Motor neuron (in vitro differentiated cells): ENCODE measurements at regions of chr1 and their contacts with region 1.

Region 1: GRCh38 chr1:220776720-220777326 is 9.9 kb upstream of the MTARC1 start:
- ATAC-seq: peak; percentile 99 to 100 (median 100)
- H3K4me3 ChIP-seq: no peak overlapping the region
- H3K27ac ChIP-seq: no peak overlapping the region
- H3K4me1 ChIP-seq: no peaks in the 10 kb centered on the region

Region 2: DNA sequence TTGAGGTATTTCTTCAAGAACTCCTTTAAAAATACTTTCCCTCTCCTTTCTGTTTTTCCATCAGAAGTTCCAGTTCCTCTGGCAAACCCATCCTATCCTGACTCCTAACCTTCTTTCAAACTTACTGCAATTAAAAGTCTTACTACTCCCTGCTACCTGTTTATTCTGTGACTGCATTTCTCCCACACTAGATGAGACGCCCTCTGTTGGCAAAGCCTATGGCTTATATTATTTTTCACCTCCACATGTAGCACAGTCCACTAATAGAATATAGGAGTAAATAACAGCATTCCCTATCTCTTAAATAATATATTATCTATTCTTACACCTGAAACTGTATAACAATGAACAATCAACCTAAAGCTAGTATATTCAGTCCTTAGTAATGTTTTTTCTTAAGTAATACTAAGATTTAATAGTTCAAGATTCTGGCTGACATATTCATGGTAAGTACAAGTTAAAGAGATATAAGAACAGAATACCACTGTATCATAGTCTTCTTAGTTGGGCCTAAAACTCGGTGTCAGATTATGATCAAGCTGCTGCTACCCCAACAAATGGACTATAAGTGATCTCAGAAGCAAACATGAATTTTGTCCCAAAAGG is 559.3 kb before region 1 on chr1:
- in situ Hi-C with region 1: loop called in 1 of 9 experiments (anchors 25 kb)
- ATAC-seq: peak in 2 of 8 experiments; percentile 23 to 31
- H3K4me3 ChIP-seq: no peak overlapping the region
- H3K27ac ChIP-seq: no peak overlapping the region
- H3K4me1 ChIP-seq: no peaks in the 10 kb centered on the region